Activated CD4-positive, alpha-beta T cell treated with anti-CD3 and anti-CD28 coated beads, Interleukin-2, amount 10 ng/mL, durations not matched to agents 7 days and 5 days (primary cell): ENCODE measurements at regions of chr5 and their contacts with region 1.

Region 1: DNA sequence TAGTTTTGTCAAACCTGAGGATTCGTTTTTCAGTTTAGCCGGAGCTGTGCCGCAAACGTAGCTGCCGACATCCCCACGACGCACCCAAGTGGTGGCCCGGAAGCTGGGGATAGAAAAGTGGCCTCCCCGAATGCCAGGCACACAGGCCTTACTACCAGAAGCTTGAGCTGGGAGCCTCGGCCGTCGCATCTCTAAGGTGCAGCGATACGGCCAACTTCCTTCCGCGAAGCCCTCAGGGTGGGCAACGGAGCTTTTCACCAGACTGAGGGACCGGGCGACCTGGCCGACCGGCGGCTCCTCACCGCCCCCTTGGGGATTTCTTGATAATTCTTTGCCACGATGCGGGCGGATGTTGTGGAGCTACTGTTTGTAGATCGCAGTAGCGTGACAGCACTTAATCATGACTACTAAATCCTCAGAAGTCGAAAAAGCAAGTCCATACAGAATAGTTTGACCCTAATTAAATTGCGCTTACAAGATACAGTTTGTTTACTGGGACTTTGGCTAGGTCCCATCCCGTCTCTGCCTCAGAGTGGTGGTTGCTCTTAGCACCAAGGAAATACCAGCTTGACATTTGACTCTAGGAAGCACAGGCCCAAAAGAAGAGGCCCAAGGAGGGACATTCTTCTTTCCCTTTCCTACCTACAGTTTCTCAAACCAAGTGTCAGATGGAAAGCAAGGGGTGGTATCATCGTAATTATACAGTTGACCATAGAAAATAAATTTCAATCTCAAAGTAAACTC is 613 bp upstream of the TMEM267 start:
- DNase-seq: peak; percentile 90
- H3K4me3 Mint-ChIP-seq: peak overlapping the region; percentile 97
- H3K27ac Mint-ChIP-seq: peak overlapping the region; percentile 100
- H3K4me1 Mint-ChIP-seq: peaks cover 45% of the 10 kb centered on the region
- H3K27me3 Mint-ChIP-seq: no peaks in the 10 kb centered on the region

Region 2: GRCh38 chr5:43120720-43121564 is 363.3 kb before region 1 on chr5 and contains the start of gene ZNF131:
- CTCF ChIA-PET with region 1: interaction called, 12 read pairs
- POLR2A ChIA-PET with region 1: interaction called, 3 read pairs
- DNase-seq: peak; percentile 96
- H3K4me3 Mint-ChIP-seq: peak within 1 kb of the TSS; percentile 91
- H3K27ac Mint-ChIP-seq: peak within 1 kb of the TSS; percentile 95
- H3K4me1 Mint-ChIP-seq: peaks cover 45% of the 10 kb centered on the region
- H3K27me3 Mint-ChIP-seq: no peaks in the 10 kb centered on the region
- total RNA-seq, gene ZNF131: 48.4 to 50.8 TPM

Region 3: GRCh38 chr5:43313035-43313853 is 171.0 kb before region 1 on chr5 and contains the start of gene HMGCS1:
- CTCF ChIA-PET with region 1: interaction called, 10 read pairs
- POLR2A ChIA-PET with region 1: interaction called, 7 read pairs
- DNase-seq: peak; percentile 99
- H3K4me3 Mint-ChIP-seq: peak within 1 kb of the TSS; percentile 99
- H3K27ac Mint-ChIP-seq: peak within 1 kb of the TSS; percentile 91
- H3K4me1 Mint-ChIP-seq: peaks cover 65% of the 10 kb centered on the region
- H3K27me3 Mint-ChIP-seq: no peaks in the 10 kb centered on the region
- total RNA-seq, gene HMGCS1: 54.3 to 57.5 TPM

Region 4: DNA sequence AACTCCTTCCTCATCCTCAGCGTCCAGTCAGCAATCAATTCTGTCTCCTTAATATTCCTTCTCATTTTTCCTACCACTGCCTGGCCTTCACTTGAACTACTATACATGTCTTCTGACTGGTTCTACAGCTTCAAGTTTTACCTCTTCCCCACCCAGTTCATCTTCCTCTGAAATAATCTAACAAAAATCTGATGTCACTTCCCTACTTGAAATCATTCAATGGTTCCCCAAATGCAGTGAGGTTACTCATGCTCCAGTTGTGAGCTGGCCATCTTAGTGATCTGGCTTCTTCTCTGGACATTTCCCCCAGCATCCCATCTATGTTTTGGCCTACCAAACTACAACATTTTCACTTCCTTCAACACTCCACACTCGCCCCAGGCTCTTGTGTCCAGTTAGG is 14.3 kb after region 1 on chr5:
- CTCF ChIA-PET with region 1: interaction called, 23 read pairs
- POLR2A ChIA-PET with region 1: no interaction called
- DNase-seq: no peak
- H3K4me3 Mint-ChIP-seq: no peak overlapping the region
- H3K27ac Mint-ChIP-seq: no peak overlapping the region
- H3K4me1 Mint-ChIP-seq: peaks cover 1% of the 10 kb centered on the region
- H3K27me3 Mint-ChIP-seq: no peaks in the 10 kb centered on the region

Region 5: GRCh38 chr5:43514816-43515677 is 30.8 kb after region 1 on chr5 and contains the start of gene C5orf34:
- CTCF ChIA-PET with region 1: interaction called, 12 read pairs
- POLR2A ChIA-PET with region 1: interaction called, 5 read pairs
- DNase-seq: peak; percentile 96
- H3K4me3 Mint-ChIP-seq: peak within 1 kb of the TSS; percentile 87
- H3K27ac Mint-ChIP-seq: peak within 1 kb of the TSS; percentile 98
- H3K4me1 Mint-ChIP-seq: peaks cover 36% of the 10 kb centered on the region
- H3K27me3 Mint-ChIP-seq: no peaks in the 10 kb centered on the region
- total RNA-seq, gene C5orf34: 10.7 to 11.0 TPM

Region 6: DNA sequence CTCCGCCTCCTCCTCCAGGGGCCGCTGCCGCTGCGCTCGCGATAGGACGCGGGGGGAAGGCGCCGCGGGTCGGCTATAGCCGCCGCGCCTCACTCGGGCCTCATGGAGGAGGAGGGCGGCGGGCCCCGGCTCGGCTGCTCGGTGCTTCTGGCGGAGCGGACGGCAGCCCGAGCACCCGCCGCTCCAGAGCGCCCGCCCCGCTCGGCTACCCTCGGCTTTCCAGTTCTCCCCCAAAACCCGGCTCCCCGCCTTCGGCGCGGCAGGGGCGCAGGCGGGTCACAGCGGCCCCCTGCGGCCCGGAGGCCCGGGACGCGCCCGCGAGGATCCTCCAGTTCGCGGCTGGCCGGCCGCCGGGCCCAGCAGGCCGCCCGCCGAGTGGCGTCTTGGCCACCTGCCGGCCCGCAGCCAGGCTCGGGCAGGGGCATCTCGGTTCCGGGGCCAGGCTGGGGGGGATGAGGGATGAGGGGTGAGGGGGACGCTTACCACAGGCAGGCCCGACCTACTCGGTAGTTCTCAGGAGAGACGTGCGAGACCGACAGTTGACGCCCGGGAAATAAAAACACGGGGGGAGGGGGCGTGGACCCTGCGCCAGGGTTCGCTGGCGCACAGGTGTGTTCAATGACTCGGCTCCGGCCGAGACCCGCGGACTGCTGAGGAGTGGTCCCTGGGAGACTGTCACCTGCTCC is 72.7 kb after region 1 on chr5 and contains the start of gene PAIP1:
- CTCF ChIA-PET with region 1: interaction called, 14 read pairs
- POLR2A ChIA-PET with region 1: interaction called, 3 read pairs
- DNase-seq: peak; percentile 84
- H3K4me3 Mint-ChIP-seq: peak within 1 kb of the TSS; percentile 90
- H3K27ac Mint-ChIP-seq: peak within 1 kb of the TSS; percentile 95
- H3K4me1 Mint-ChIP-seq: peaks cover 21% of the 10 kb centered on the region
- H3K27me3 Mint-ChIP-seq: peaks cover 11% of the 10 kb centered on the region
- total RNA-seq, gene PAIP1: 35.3 to 37.1 TPM

Region 7: DNA sequence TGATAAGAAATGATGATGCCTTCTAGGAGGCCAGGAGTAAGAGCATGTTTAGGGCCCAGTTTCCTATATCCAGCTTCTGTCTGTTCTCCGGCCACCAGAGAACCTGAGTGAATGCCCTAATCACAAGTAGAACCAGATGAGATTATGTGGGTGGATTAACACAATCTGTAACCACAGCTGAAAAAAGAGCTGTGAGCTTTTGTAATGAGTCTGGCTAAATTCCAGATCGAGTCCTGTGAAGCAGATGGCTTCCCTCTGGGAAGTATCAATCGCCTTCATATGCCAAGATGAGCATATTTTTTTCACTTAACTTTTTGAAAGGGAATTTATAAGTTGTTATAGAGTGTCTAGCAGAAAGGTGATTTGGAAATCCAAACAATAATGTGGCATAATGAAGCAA is 218.5 kb after region 1 on chr5:
- CTCF ChIA-PET with region 1: no interaction called
- POLR2A ChIA-PET with region 1: no interaction called
- DNase-seq: no peak
- H3K4me3 Mint-ChIP-seq: no peak overlapping the region
- H3K27ac Mint-ChIP-seq: no peak overlapping the region
- H3K4me1 Mint-ChIP-seq: no peaks in the 10 kb centered on the region
- H3K27me3 Mint-ChIP-seq: no peaks in the 10 kb centered on the region